ENCODE measurements at regions of chr20 and their contacts with region 1.

Region 1: DNA sequence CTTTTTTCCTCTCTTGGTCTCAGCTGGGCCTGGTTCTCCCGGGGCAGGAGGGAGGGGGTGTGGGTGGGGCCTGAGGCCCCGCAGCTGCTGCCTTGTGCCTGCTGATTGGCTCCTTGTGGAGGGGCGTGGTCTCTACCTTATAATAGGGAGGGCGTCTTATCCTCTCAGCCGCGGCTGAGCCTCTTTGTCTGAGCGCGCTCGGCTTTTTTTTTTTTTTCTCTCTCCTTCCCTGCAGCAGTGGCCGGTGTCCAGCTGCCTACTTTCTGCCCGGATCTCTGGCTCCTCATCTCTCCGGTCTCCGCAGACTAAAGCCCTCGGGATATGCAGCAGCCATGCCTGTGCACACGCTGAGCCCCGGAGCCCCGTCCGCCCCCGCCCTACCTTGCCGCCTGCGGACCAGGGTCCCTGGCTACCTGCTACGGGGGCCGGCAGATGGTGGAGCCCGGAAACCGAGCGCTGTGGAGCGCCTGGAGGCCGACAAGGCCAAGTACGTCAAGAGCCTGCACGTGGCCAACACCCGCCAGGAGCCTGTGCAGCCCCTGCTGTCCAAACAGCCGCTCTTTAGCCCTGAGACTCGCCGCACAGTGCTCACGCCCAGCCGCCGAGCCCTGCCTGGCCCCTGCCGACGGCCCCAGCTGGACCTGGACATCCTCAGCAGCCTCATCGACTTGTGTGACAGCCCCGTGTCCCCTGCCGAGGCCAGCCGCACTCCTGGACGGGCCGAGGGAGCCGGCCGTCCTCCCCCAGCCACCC is 11.1 kb downstream of the FAM110A start:
- DNase-seq: peak; percentile 78
- H3K4me3 Mint-ChIP-seq: peak overlapping the region; percentile 86
- H3K27ac Mint-ChIP-seq: peak overlapping the region; percentile 70
- H3K4me1 Mint-ChIP-seq: peaks cover 48% of the 10 kb centered on the region
- H3K27me3 Mint-ChIP-seq: no peaks in the 10 kb centered on the region

Region 2: DNA sequence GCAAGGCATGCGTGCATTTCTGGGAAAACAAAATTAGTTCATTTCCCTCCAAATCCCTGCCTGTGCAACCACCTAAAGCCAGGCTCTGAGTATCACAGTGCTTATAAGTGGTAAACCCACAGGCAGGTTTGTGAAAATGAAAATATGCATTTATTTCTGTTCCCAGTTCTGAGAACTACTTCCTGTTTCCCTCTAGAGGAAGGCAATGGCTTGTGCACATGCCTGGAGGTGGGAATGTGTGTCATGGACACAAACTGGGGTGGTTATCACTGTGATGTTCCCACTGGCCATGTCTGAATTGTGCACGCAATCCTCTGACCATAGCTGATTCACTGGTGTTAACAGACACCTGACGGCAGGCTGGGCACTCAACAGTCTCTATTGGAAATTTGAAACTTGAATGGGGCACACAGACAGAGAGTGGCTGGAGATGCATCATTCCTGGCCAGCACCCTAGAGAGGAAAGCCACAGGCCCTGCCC is 15.1 kb after region 1 on chr20:
- intact Hi-C with region 1: loop called (anchors 2 kb)
- DNase-seq: no peak
- H3K4me3 Mint-ChIP-seq: no peak overlapping the region
- H3K27ac Mint-ChIP-seq: peak overlapping the region; percentile 6
- H3K4me1 Mint-ChIP-seq: peaks cover 64% of the 10 kb centered on the region
- H3K27me3 Mint-ChIP-seq: no peaks in the 10 kb centered on the region

Region 3: DNA sequence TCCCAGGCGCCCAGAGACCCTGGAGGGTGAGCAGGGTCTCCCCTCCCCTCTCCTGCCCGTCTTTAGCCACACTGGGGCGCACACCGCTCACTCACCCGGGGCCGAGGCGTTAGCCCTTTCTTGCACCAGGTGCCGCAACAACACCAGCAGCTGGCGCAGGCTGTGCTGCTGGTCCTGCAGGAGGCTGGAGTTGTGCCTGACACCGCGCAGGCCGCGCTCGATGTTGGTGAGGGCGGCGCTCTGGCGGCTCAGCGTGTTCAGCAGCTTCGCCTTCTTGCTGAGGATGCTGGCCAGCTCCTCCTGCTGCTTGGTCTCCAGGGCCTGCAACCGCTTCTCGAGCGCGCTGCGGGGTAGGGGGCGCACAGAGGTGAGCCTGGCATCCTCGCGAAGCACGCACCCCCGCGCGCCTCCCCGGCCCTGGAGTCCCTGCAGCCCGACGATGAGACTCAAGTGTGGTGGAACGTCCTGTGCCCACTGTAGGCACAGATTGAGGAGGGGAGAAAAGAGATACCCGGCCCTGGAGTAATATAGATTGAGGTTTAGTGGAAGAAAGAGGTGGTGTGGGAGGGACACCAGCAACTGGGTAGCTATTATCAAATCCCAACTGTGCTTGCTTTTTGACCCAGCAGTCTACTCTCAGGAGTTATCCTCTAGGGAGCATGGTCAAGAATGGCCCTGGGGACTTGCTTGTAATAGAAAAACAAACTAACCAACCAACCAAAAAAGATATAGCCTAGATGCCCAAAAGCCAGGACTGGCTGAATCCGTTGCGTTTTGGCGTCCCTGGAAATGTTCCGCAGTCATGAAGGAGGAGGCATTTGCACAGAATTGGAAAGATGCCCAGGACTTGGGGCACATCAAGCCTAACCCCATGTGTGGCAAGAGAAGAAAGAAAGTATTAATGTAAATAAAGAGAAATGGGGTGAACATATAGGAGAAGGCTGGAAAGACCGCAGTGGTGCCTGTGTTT is 40.6 kb after region 1 on chr20:
- intact Hi-C with region 1: loop called (anchors 5 kb)
- DNase-seq: no peak
- H3K4me3 Mint-ChIP-seq: no peak overlapping the region
- H3K27ac Mint-ChIP-seq: no peak overlapping the region
- H3K4me1 Mint-ChIP-seq: peaks cover 20% of the 10 kb centered on the region
- H3K27me3 Mint-ChIP-seq: peaks cover 16% of the 10 kb centered on the region

Region 4: GRCh38 chr20:905396-905961 is 60.8 kb after region 1 on chr20:
- intact Hi-C with region 1: no loop called
- DNase-seq: no peak
- H3K4me3 Mint-ChIP-seq: no peak overlapping the region
- H3K27ac Mint-ChIP-seq: no peak overlapping the region
- H3K4me1 Mint-ChIP-seq: peaks cover 6% of the 10 kb centered on the region
- H3K27me3 Mint-ChIP-seq: no peaks in the 10 kb centered on the region

Region 5: DNA sequence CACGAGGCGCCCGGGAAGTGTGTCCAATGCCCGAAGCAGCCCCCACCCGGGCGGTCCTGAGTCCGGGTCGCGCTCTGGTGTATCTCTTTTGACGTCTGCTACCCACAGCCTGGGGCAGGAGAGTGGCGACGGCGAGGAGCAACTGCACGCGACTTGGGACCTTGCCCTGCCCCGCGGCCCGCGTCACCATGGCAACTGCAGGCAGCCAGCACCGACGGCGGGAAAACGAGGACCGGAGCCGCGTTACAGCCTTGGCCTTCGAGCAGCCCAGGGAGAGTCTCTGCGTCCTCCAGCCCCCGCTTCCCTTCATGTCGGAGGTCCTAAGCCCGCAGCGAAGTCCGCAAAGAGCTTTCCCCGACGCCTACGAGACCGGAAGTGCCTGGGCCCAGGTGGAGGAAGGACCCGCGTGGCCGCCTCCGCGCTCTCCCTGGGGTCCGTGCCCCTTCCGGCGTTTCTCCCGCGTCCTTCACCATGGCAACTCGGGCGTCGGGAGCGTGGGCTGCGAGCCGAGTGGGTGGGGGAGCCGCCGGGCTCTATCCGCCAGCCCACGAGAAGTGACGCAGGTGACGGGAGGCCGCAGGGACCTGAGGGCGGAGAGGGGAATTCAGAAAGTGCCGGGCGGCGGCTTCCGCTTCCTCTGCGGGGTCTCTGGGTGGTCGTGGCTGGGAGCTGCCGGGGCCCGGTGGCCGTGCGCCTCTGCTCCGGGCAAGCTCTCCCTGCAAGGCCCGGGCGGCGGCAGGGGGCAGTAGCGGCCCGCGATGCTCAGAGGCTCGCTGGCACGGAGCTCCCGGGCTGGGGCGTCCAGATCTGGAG is 1362.5 kb after region 1 on chr20:
- intact Hi-C with region 1: loop called (anchors 5 kb)
- DNase-seq: peak; percentile 52
- H3K4me3 Mint-ChIP-seq: peak overlapping the region; percentile 80
- H3K27ac Mint-ChIP-seq: peak overlapping the region; percentile 61
- H3K4me1 Mint-ChIP-seq: no peaks in the 10 kb centered on the region
- H3K27me3 Mint-ChIP-seq: peaks cover 22% of the 10 kb centered on the region

Measured in activated T-helper 1 cell treated with anti-CD3 and anti-CD28 coated beads, Interleukin-12 subunit alpha, Interleukin-12 subunit beta, Interleukin-2, Interleukin-4 antibody, amounts not matched to agents 30 ng/mL and 10 ng/mL and 1 ng/mL, durations not matched to agents 14 hours and 24 hours and 36 hours (primary cell).